ENCODE measurements at regions of chr2 and their contacts with region 1.

Region 1: GRCh38 chr2:130930740-130931659 is 94.3 kb downstream of the ARHGEF4 start:
- DNase-seq: no peak
- ATAC-seq: no peak
- H3K4me3 ChIP-seq: no peak overlapping the region
- H3K27ac ChIP-seq: no peak overlapping the region
- H3K4me1 ChIP-seq: no peaks in the 10 kb centered on the region
- H3K27me3 ChIP-seq: no peaks in the 10 kb centered on the region; a peak in 1 of 4 replicates
- CTCF ChIP-seq: no peak
- EP300 ChIP-seq: no peak
- POLR2A ChIP-seq: no peak
- RAD21 ChIP-seq: no peak

Region 2: GRCh38 chr2:130884503-130884902 is 46.5 kb before region 1 on chr2:
- CTCF ChIA-PET with region 1: no interaction called
- POLR2A ChIA-PET with region 1: interaction called, 13 read pairs
- RAD21 ChIA-PET with region 1: no interaction called
- SMC1A ChIA-PET with region 1: no interaction called
- in situ Hi-C with region 1: no loop called
- intact Hi-C with region 1: no loop called
- DNase-seq: no peak
- ATAC-seq: no peak
- H3K4me3 ChIP-seq: no peak overlapping the region
- H3K27ac ChIP-seq: no peak overlapping the region
- H3K4me1 ChIP-seq: no peaks in the 10 kb centered on the region
- H3K27me3 ChIP-seq: no peaks in the 10 kb centered on the region; a peak in 1 of 4 replicates
- CTCF ChIP-seq: 0 out of 6 replicates have a peak, but pooled peaks of 1 of the 3 experiments have one; percentile 1
- EP300 ChIP-seq: no peak
- POLR2A ChIP-seq: no peak
- RAD21 ChIP-seq: no peak

Region 3: GRCh38 chr2:130911482-130911881 is 19.5 kb before region 1 on chr2:
- CTCF ChIA-PET with region 1: no interaction called
- POLR2A ChIA-PET with region 1: no interaction called
- RAD21 ChIA-PET with region 1: no interaction called
- SMC1A ChIA-PET with region 1: no interaction called
- in situ Hi-C with region 1: no loop called
- intact Hi-C with region 1: no loop called
- DNase-seq: no peak
- ATAC-seq: no peak
- H3K4me3 ChIP-seq: no peak overlapping the region
- H3K27ac ChIP-seq: no peak overlapping the region
- H3K4me1 ChIP-seq: no peaks in the 10 kb centered on the region
- H3K27me3 ChIP-seq: peaks cover 0 to 3% of the 10 kb centered on the region in 2 experiments; a peak in 3 of 4 replicates
- CTCF ChIP-seq: no peak
- EP300 ChIP-seq: no peak
- POLR2A ChIP-seq: no peak
- RAD21 ChIP-seq: no peak

Region 4: GRCh38 chr2:131040661-131041401 is 109.8 kb after region 1 on chr2:
- CTCF ChIA-PET with region 1: no interaction called
- POLR2A ChIA-PET with region 1: no interaction called
- RAD21 ChIA-PET with region 1: no interaction called
- SMC1A ChIA-PET with region 1: no interaction called
- in situ Hi-C with region 1: no loop called
- intact Hi-C with region 1: no loop called
- DNase-seq: no peak
- ATAC-seq: no peak
- H3K4me3 ChIP-seq: no peak overlapping the region
- H3K27ac ChIP-seq: no peak overlapping the region
- H3K4me1 ChIP-seq: no peaks in the 10 kb centered on the region
- H3K27me3 ChIP-seq: peaks cover 0 to 2% of the 10 kb centered on the region in 2 experiments; a peak in 1 of 4 replicates
- CTCF ChIP-seq: no peak
- EP300 ChIP-seq: no peak
- POLR2A ChIP-seq: no peak
- RAD21 ChIP-seq: no peak